ENCODE measurements at regions of chrX and their contacts with region 1.

Region 1: DNA sequence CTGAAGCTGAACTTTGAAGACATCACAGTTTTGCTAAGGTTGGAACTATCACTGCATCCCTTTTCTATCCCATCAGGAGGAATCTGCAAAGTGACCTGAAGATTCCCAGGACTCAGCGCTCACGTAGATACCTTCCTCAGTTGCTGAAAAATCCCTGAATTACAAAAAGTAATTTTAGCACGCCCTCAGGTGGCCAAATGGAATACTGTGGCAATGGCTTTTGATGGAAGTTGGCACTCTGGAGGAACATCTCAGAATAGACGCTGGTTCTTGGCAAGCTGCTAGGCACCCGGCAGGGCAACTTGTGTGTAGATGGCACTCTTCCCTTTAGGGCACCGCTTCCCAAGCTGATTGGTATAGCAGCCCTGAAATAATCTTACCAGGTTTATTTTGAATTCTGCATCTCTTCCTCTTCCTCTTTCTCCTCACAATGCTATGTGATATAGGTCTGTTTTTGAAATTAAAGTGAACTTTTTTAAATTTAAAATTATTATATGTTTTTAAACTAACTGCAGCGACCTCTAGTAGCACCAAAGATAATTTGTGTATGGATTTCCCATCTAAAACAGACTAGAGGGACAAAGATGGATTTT is 16.3 kb upstream of the ESX1 start:
- DNase-seq: peak in 1 of 2 experiments; percentile 72
- H3K4me3 ChIP-seq: no peak overlapping the region
- H3K27ac ChIP-seq: no peak overlapping the region
- H3K4me1 ChIP-seq: peaks cover 0 to 3% (median 0%) of the 10 kb centered on the region in 4 experiments; a peak in 1 of 7 replicates
- H3K27me3 ChIP-seq: peaks cover 1 to 13% (median 6%) of the 10 kb centered on the region in 4 experiments
- CTCF ChIP-seq: peak; percentile 8 to 74 (median 69)
- EP300 ChIP-seq: no peak
- POLR2A ChIP-seq: no peak
- RAD21 ChIP-seq: peak; percentile 76 to 83

Region 2: GRCh38 chrX:103889231-103889630 is 381.8 kb before region 1 on chrX:
- CTCF ChIA-PET with region 1: no interaction called
- POLR2A ChIA-PET with region 1: no interaction called
- DNase-seq: no peak
- H3K4me3 ChIP-seq: no peak overlapping the region
- H3K27ac ChIP-seq: no peak overlapping the region
- H3K4me1 ChIP-seq: no peaks in the 10 kb centered on the region
- H3K27me3 ChIP-seq: no peaks in the 10 kb centered on the region
- CTCF ChIP-seq: no peak
- EP300 ChIP-seq: no peak
- POLR2A ChIP-seq: no peak
- RAD21 ChIP-seq: no peak

Region 3: DNA sequence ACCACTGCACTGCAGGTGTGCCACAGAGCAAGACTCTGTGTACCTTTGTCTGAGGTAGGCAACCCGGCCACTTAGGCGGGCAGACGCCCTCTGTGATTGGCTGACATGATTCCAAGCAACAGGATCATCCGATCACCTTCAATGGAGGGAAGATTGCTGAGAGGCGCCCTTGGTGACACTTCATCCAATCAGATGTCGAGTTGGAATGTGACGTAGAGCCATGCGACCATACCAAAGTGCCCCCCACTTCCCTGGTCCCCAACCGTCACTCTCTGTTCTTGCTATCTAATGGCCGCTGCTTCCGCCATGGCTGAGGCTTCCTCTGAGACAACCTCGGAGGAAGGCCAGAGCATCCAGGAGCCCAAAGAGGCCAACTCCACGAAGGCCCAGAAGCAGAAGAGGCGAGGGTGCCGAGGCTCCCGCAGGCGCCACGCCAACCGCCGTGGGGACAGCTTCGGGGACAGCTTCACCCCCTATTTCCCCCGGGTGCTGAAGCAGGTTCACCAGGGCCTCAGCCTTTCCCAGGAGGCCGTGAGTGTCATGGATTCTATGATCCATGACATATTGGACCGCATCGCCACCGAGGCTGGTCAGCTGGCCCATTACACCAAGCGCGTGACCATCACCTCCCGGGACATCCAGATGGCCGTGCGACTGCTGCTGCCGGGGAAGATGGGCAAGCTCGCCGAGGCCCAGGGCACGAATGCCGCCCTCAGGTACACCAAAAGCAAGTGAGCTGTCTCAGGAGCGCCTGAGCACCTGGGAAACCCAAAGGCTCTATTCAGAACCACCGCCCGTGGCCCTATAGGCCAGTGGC is 231.1 kb before region 1 on chrX and contains the start of gene H2BW2:
- CTCF ChIA-PET with region 1: no interaction called
- POLR2A ChIA-PET with region 1: no interaction called
- DNase-seq: no peak
- H3K4me3 ChIP-seq: no peak within 1 kb of the TSS
- H3K27ac ChIP-seq: no peak within 1 kb of the TSS
- H3K4me1 ChIP-seq: no peaks in the 10 kb centered on the region
- H3K27me3 ChIP-seq: no peaks in the 10 kb centered on the region
- CTCF ChIP-seq: no peak
- EP300 ChIP-seq: no peak
- POLR2A ChIP-seq: no peak
- RAD21 ChIP-seq: no peak
- total RNA-seq, gene H2BW2: not detected in 2 replicates

Region 4: GRCh38 chrX:104195489-104196084 is 75.4 kb before region 1 on chrX:
- CTCF ChIA-PET with region 1: interaction called, 42 read pairs
- POLR2A ChIA-PET with region 1: interaction called, 3 read pairs
- DNase-seq: no peak
- H3K4me3 ChIP-seq: no peak overlapping the region
- H3K27ac ChIP-seq: no peak overlapping the region
- H3K4me1 ChIP-seq: no peaks in the 10 kb centered on the region
- H3K27me3 ChIP-seq: no peaks in the 10 kb centered on the region
- CTCF ChIP-seq: peak in 2 of 3 experiments; percentile 34 to 37; a peak in 2 of 4 replicates
- EP300 ChIP-seq: no peak
- POLR2A ChIP-seq: no peak
- RAD21 ChIP-seq: peak; percentile 50 to 56

Region 5: GRCh38 chrX:104254442-104255115 is 16.4 kb before region 1 on chrX and contains the start of gene ESX1:
- CTCF ChIA-PET with region 1: interaction called, 18 read pairs
- POLR2A ChIA-PET with region 1: no interaction called
- DNase-seq: peak in 1 of 2 experiments; percentile 50
- H3K4me3 ChIP-seq: peak within 1 kb of the TSS; percentile 19 to 54 (median 22); a peak in 5 of 8 replicates
- H3K27ac ChIP-seq: no peak within 1 kb of the TSS
- H3K4me1 ChIP-seq: peaks cover 0 to 4% (median 1%) of the 10 kb centered on the region in 4 experiments; a peak in 2 of 7 replicates
- H3K27me3 ChIP-seq: peaks cover 46 to 90% (median 81%) of the 10 kb centered on the region in 4 experiments
- CTCF ChIP-seq: no peak
- EP300 ChIP-seq: no peak
- POLR2A ChIP-seq: no peak
- RAD21 ChIP-seq: no peak
- total RNA-seq, gene ESX1: not detected in 2 replicates

Region 6: GRCh38 chrX:104351173-104351769 is 80.3 kb after region 1 on chrX:
- CTCF ChIA-PET with region 1: no interaction called
- POLR2A ChIA-PET with region 1: no interaction called
- DNase-seq: no peak
- H3K4me3 ChIP-seq: no peak overlapping the region
- H3K27ac ChIP-seq: no peak overlapping the region
- H3K4me1 ChIP-seq: no peaks in the 10 kb centered on the region
- H3K27me3 ChIP-seq: no peaks in the 10 kb centered on the region
- CTCF ChIP-seq: no peak
- EP300 ChIP-seq: no peak
- POLR2A ChIP-seq: no peak
- RAD21 ChIP-seq: no peak